Activated CD4-positive, alpha-beta memory T cell treated with anti-CD3 and anti-CD28 coated beads, Interleukin-2, amount 10 ng/mL, durations not matched to agents 7 days and 5 days (primary cell): ENCODE measurements at regions of chr15 and their contacts with region 1.

Region 1: GRCh38 chr15:40098489-40099261 is 10.0 kb downstream of the BMF start:
- DNase-seq: peak; percentile 81
- H3K4me3 Mint-ChIP-seq: peak overlapping the region; percentile 48
- H3K27ac Mint-ChIP-seq: peak overlapping the region; percentile 90
- H3K4me1 Mint-ChIP-seq: peaks cover 78% of the 10 kb centered on the region
- H3K27me3 Mint-ChIP-seq: no peaks in the 10 kb centered on the region

Region 2: GRCh38 chr15:40038638-40039543 is 59.8 kb before region 1 on chr15 and contains the start of gene SRP14:
- CTCF ChIA-PET with region 1: interaction called, 146 read pairs
- POLR2A ChIA-PET with region 1: interaction called, 19 read pairs
- DNase-seq: peak; percentile 94
- H3K4me3 Mint-ChIP-seq: peak within 1 kb of the TSS; percentile 100
- H3K27ac Mint-ChIP-seq: peak within 1 kb of the TSS; percentile 95
- H3K4me1 Mint-ChIP-seq: peaks cover 56% of the 10 kb centered on the region
- H3K27me3 Mint-ChIP-seq: no peaks in the 10 kb centered on the region
- total RNA-seq, gene SRP14: 150 to 153 TPM

Region 3: DNA sequence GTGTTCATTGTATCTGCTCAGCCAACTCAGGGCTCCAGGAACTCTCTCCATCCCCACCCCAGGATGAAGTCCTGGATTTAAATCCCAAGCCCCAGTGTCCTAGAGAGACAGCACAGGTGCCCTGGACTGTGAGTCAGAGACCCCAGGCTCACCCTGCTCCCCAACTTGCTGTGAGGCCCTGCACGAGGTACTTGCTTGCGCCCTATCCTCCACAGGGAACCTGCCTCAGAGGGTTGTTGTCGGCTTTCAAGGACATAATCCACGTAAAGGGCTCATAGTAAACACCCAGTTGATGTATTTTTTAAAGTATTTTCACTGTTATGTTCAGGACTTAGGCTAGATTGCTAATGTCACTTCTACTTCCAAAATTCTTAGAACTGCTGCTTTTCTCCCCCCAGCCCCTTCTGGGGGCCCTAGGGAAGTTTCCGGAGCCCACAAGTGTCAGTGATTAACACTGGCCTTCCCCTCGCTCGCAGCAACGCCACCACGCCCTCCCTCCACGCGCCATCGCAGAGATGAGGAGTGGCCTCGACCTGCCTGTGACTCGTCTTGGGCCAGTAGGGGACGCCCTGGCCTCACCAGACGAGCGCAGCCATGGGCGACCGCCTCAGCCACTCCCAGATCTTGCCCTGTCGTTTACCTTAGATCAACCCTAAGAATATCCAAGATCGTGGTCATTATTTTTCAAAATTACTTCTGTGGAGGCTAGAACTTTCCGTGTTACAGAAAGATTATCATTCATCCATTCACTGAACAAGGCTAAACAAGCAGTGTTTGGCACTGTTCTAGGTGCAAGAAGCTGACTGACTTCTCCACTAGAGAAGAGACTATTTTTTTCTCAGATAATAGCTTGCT is 53.7 kb before region 1 on chr15:
- CTCF ChIA-PET with region 1: interaction called, 146 read pairs
- POLR2A ChIA-PET with region 1: interaction called, 53 read pairs
- DNase-seq: peak; percentile 88
- H3K4me3 Mint-ChIP-seq: no peak overlapping the region
- H3K27ac Mint-ChIP-seq: peak overlapping the region; percentile 47
- H3K4me1 Mint-ChIP-seq: peaks cover 77% of the 10 kb centered on the region
- H3K27me3 Mint-ChIP-seq: no peaks in the 10 kb centered on the region

Region 4: GRCh38 chr15:40115670-40116093 is 17.0 kb after region 1 on chr15:
- CTCF ChIA-PET with region 1: interaction called, 82 read pairs
- POLR2A ChIA-PET with region 1: interaction called, 73 read pairs
- DNase-seq: peak; percentile 83
- H3K4me3 Mint-ChIP-seq: peak overlapping the region; percentile 45
- H3K27ac Mint-ChIP-seq: peak overlapping the region; percentile 92
- H3K4me1 Mint-ChIP-seq: peaks cover 31% of the 10 kb centered on the region
- H3K27me3 Mint-ChIP-seq: peaks cover 14% of the 10 kb centered on the region